ENCODE measurements at regions of chrX and their contacts with region 1.

Region 1: GRCh38 chrX:120125444-120125843 is 9.7 kb upstream of the RHOXF1 start:
- DNase-seq: peak in 2 of 5 donors; percentile 20 to 24
- ATAC-seq: peak in 3 of 4 donors; percentile 50 to 68 (median 65)
- H3K4me3 ChIP-seq: peak overlapping the region in 7 of 12 donors; percentile 10 to 28 (median 21)
- H3K27ac ChIP-seq: peak overlapping the region in 5 of 12 donors; percentile 20 to 67 (median 46)
- H3K4me1 ChIP-seq: peaks cover 0 to 12% (median 0%) of the 10 kb centered on the region in 12 donors
- H3K27me3 ChIP-seq: no peaks in the 10 kb centered on the region
- CTCF ChIP-seq: no peak
- POLR2A ChIP-seq: no peak

Region 2: DNA sequence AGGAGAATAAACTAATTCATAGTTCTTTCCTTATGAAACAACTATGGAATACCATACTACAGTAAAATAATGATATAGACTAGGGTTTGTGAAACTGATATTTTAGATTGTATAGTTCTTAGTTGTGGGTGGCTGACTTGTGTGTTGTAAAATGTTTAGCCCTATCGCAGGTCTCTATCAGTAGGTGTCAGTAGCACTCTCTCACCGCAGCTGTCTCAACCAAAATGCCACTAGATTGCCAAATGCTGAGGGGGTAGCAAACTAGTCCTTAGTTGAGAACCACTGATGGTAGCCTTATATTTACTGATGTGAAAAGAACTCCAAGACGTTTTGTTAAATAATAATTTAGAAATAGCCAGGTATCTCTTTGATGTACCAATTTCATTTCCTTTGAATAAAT is 96.1 kb before region 1 on chrX:
- intact Hi-C with region 1: loop called in 1 of 10 experiments (anchors 10 kb)
- DNase-seq: no peak
- ATAC-seq: no peak
- H3K4me3 ChIP-seq: no peak overlapping the region
- H3K27ac ChIP-seq: no peak overlapping the region
- H3K4me1 ChIP-seq: no peaks in the 10 kb centered on the region
- H3K27me3 ChIP-seq: peaks cover 0 to 31% (median 0%) of the 10 kb centered on the region in 9 donors
- CTCF ChIP-seq: no peak
- POLR2A ChIP-seq: no peak

Region 3: DNA sequence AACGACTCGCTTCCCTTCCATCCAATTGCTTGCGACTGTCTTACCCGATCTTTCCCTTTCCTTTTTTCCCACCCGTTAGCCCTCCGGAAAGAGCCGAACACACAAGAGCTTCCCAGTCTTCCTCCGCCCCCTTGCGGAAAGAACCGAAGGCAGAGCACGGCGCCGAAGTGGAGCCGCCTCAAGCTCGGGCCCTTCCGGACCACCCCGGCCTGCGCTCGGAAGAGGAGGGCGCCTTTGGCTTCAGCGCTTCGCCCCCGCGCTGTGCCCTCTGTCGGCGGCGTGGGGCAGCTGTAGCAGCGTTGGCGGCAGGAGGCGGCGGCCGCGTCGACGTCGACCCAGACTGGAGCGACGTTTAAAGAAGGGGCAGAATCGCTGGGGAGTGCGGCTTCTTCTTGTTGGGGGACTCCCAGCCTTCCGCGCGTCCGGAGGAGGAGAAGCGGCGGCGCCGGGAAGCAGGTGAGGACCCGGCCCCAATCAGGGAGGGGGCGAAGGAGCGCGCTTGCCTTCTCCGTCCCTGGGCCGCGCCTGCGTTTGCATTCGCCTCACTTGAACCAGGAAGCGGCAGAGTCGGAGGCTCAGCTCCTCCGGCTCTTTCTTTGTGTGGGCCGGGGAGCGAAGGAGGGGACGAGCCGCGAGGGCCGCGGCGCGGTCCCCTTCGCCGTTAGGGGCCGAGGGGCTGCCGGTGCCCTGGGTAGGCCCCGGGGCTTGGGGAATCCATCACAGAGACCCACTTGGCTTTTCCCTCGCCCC is 125.3 kb after region 1 on chrX and contains the start of gene ZBTB33:
- intact Hi-C with region 1: no loop called
- DNase-seq: peak; percentile 91 to 94 (median 93)
- ATAC-seq: peak; percentile 99 to 100 (median 99)
- H3K4me3 ChIP-seq: peak within 1 kb of the TSS; percentile 50 to 95 (median 72)
- H3K27ac ChIP-seq: peak within 1 kb of the TSS; percentile 55 to 94 (median 88)
- H3K4me1 ChIP-seq: peaks cover 0 to 14% (median 0%) of the 10 kb centered on the region in 12 donors
- H3K27me3 ChIP-seq: peaks cover 0 to 3% (median 0%) of the 10 kb centered on the region in 9 donors
- CTCF ChIP-seq: peak; percentile 44 to 80 (median 62)
- POLR2A ChIP-seq: peak in 1 of 2 donors; percentile 8
- total RNA-seq, gene ZBTB33: 5.3 to 8.9 (median 7.1) TPM